CD14-positive monocyte (primary cell): ENCODE measurements at regions of chr6 and their contacts with region 1.

Region 1: GRCh38 chr6:105932440-105932839 is 153.7 kb upstream of the PRDM1 start:
- DNase-seq: no peak
- H3K4me3 ChIP-seq: no peak overlapping the region
- H3K4me3 Mint-ChIP-seq: no peak overlapping the region
- H3K27ac ChIP-seq: no peak overlapping the region
- H3K27ac Mint-ChIP-seq: no peak overlapping the region
- H3K4me1 ChIP-seq: peaks cover 22 to 34% of the 10 kb centered on the region in 2 donors
- H3K4me1 Mint-ChIP-seq: peaks cover 29% of the 10 kb centered on the region
- H3K27me3 ChIP-seq: no peaks in the 10 kb centered on the region
- H3K27me3 Mint-ChIP-seq: no peaks in the 10 kb centered on the region
- CTCF ChIP-seq: no peak

Region 2: DNA sequence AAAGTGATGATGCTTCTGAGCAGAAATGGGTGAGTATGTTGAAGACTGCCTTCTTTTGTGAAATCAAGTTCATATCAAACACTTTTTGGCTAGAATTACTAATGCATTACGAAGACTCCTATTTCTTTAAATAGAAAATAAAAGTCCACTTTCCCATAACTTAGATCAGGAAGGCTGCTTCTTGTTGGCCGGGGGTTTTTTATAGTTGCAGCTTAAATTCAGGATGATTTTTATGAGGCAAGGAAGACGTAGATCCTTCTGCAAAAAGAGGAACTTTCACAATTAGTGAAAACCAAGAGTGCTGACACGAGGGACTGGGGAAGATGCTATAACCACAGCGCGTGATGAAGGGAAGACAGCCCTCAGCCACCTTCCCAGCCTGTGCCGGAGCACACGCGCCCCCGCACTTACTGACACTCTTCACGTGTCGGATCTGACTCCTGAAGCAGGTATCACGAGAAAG is 52.4 kb before region 1 on chr6:
- intact Hi-C with region 1: loop called in 1 of 2 experiments (anchors 10 kb)
- DNase-seq: peak; percentile 95 to 98 (median 96)
- H3K4me3 ChIP-seq: peak overlapping the region in 1 of 3 experiments; percentile 34
- H3K4me3 Mint-ChIP-seq: peak overlapping the region; percentile 54 to 75
- H3K27ac ChIP-seq: peak overlapping the region; percentile 75 to 95
- H3K27ac Mint-ChIP-seq: peak overlapping the region; percentile 90 to 99 (median 97)
- H3K4me1 ChIP-seq: peaks cover 49 to 59% of the 10 kb centered on the region in 2 donors
- H3K4me1 Mint-ChIP-seq: peaks cover 68% of the 10 kb centered on the region
- H3K27me3 ChIP-seq: no peaks in the 10 kb centered on the region
- H3K27me3 Mint-ChIP-seq: peaks cover 0 to 9% (median 0%) of the 10 kb centered on the region in 3 donors
- CTCF ChIP-seq: no peak